Activated CD4-positive, alpha-beta T cell treated with anti-CD3 and anti-CD28 coated beads for 36 hours (primary cell): ENCODE measurements at regions of chr1 and their contacts with region 1.

Region 1: DNA sequence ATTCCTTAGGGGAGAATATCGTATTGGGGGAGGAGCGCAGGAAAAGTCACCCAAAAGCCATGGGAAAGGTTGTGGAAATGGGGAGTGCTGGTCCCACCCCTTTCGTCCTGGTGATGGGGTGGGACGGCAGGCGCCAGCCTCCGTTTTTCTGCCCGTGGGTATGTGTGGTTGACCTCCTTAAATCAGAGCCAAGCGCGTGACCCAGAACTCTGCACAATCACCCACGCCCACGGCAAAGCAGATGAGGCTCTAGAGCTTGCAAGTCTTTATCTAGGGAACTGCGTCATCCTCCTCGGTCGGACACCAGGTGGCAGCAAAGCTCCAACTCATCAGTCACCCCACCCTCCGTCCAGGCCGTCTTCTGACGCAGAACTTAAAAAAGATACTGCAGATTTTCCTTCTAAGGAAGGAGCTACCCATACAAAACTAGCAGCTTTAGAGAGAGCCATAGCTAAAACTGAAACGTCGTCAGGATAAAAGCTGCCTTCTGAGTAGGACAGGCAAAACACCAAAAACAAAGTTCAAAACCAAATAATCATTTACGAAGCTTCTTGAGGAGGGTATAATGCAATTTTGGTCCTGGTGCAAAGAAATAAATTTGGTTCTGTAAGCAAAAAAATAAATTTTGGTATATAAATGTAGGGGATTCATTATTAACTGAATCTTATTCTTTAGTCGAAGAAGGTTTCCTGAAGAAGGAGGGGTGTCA is 62.0 kb downstream of the TBX19 start:
- DNase-seq: peak; percentile 94
- ATAC-seq: peak; percentile 98
- H3K4me3 Mint-ChIP-seq: no peak overlapping the region
- H3K27ac Mint-ChIP-seq: peak overlapping the region; percentile 27
- H3K4me1 Mint-ChIP-seq: peaks cover 24% of the 10 kb centered on the region
- H3K27me3 Mint-ChIP-seq: no peaks in the 10 kb centered on the region

Region 2: DNA sequence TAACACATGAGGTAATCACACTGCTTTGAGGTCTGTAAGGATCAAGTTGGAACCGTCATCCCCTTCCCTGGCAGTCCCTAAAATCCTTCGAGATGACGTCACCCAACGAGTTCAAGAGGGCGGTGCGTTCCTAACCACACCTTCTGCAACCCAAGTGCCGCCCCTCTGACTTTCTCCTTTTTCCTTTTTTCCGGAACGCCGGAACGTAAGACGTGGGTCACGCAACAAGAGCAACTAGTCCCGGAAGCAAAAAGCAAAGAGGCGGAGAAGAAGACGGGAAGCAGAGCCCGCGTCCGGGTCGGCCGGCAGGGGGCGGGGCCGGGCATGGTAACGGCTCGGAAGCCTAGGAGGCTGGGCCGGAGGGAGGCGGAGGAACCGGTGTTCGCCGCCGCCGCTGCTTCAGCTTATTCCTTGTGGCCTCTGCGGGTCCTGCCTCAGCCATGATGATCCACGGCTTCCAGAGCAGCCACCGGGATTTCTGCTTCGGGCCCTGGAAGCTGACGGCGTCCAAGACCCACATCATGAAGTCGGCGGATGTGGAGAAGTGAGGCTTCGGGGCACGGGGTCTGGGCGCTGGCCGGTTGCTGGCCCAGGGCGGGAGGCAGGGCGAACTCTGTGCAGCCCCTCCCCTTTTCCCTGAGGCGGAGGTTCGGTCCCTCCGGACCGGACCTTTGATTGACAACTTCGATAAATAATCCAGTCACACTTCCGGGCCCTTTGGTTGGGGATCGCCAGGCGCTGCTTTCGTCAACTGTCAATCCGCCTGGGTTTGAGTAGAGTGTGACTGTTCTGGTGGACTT is 163.9 kb before region 1 on chr1 and contains the start of gene TIPRL:
- CTCF ChIA-PET with region 1: interaction called, 3 read pairs
- POLR2A ChIA-PET with region 1: no interaction called
- intact Hi-C with region 1: loop called in 1 of 2 experiments (anchors 5 kb)
- DNase-seq: peak; percentile 97
- ATAC-seq: peak; percentile 90
- H3K4me3 Mint-ChIP-seq: no peak within 1 kb of the TSS
- H3K27ac Mint-ChIP-seq: no peak within 1 kb of the TSS
- H3K4me1 Mint-ChIP-seq: peaks cover 9% of the 10 kb centered on the region
- H3K27me3 Mint-ChIP-seq: no peaks in the 10 kb centered on the region
- total RNA-seq, gene TIPRL: 52.5 to 57.5 TPM

Region 3: GRCh38 chr1:168291222-168291837 is 51.4 kb before region 1 on chr1:
- CTCF ChIA-PET with region 1: no interaction called
- POLR2A ChIA-PET with region 1: no interaction called
- intact Hi-C with region 1: no loop called
- DNase-seq: no peak
- ATAC-seq: no peak
- H3K4me3 Mint-ChIP-seq: no peak overlapping the region
- H3K27ac Mint-ChIP-seq: no peak overlapping the region
- H3K4me1 Mint-ChIP-seq: peaks cover 13% of the 10 kb centered on the region
- H3K27me3 Mint-ChIP-seq: no peaks in the 10 kb centered on the region

Region 4: GRCh38 chr1:168360151-168361021 is 17.7 kb after region 1 on chr1:
- CTCF ChIA-PET with region 1: interaction called, 97 read pairs
- POLR2A ChIA-PET with region 1: no interaction called
- intact Hi-C with region 1: loop called (anchors 1 to 2 kb)
- DNase-seq: peak; percentile 67
- ATAC-seq: peak; percentile 40
- H3K4me3 Mint-ChIP-seq: no peak overlapping the region
- H3K27ac Mint-ChIP-seq: no peak overlapping the region
- H3K4me1 Mint-ChIP-seq: peaks cover 40% of the 10 kb centered on the region
- H3K27me3 Mint-ChIP-seq: no peaks in the 10 kb centered on the region

Region 5: DNA sequence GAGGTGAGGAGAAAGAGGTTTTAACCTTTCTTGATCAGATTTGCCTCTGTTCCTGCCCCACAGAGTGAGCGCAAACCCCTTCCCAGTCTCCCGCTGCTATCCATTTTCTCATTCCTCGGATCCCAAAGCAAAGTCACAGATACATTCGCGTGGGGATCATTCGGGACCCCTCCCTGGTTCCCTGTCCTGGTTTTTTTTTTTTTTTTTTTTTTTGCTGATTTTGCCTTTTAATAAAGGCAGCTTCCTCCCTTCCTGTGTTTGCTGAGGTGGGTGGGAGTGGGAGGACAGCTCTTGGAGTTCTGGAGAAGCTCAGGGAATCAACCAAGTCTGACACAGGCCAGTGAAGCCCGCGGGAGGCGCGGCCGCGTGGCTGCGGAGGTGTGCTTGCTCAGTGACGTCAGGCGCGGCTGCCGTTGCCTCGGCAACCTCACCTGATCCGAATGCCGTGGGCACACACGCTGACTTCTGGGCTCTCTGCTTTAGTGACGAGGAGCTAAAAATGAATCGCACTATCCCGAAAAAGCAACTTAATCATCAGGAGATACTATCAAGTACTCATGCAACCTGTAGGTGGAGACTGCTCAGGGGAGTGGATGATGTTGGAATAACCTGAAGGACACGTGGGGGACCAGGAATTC is 44.3 kb after region 1 on chr1:
- CTCF ChIA-PET with region 1: interaction called, 23 read pairs
- POLR2A ChIA-PET with region 1: interaction called, 3 read pairs
- intact Hi-C with region 1: loop called in 1 of 2 experiments (anchors 2 kb)
- DNase-seq: peak; percentile 89
- ATAC-seq: peak; percentile 95
- H3K4me3 Mint-ChIP-seq: peak overlapping the region; percentile 15
- H3K27ac Mint-ChIP-seq: peak overlapping the region; percentile 82
- H3K4me1 Mint-ChIP-seq: peaks cover 19% of the 10 kb centered on the region
- H3K27me3 Mint-ChIP-seq: peaks cover 3% of the 10 kb centered on the region

Region 6: GRCh38 chr1:168439456-168440375 is 97.0 kb after region 1 on chr1:
- CTCF ChIA-PET with region 1: interaction called, 77 read pairs
- POLR2A ChIA-PET with region 1: no interaction called
- intact Hi-C with region 1: loop called (anchors 1 kb)
- DNase-seq: peak; percentile 89
- ATAC-seq: peak; percentile 95
- H3K4me3 Mint-ChIP-seq: peak overlapping the region; percentile 42
- H3K27ac Mint-ChIP-seq: no peak overlapping the region
- H3K4me1 Mint-ChIP-seq: peaks cover 32% of the 10 kb centered on the region
- H3K27me3 Mint-ChIP-seq: no peaks in the 10 kb centered on the region

Region 7: GRCh38 chr1:168572633-168573032 is 229.9 kb after region 1 on chr1:
- CTCF ChIA-PET with region 1: interaction called, 4 read pairs
- POLR2A ChIA-PET with region 1: no interaction called
- intact Hi-C with region 1: loop called (anchors 1 to 2 kb)
- DNase-seq: no peak
- ATAC-seq: no peak
- H3K4me3 Mint-ChIP-seq: no peak overlapping the region
- H3K27ac Mint-ChIP-seq: no peak overlapping the region
- H3K4me1 Mint-ChIP-seq: peaks cover 14% of the 10 kb centered on the region
- H3K27me3 Mint-ChIP-seq: peaks cover 6% of the 10 kb centered on the region